B cell (primary cell): ENCODE measurements at regions of chr7 and their contacts with region 1.

Region 1: GRCh38 chr7:19491821-19492452 is 216.9 kb downstream of the POLR1F start:
- DNase-seq: peak; percentile 8
- ATAC-seq: no peak
- H3K4me3 ChIP-seq: no peak overlapping the region
- H3K4me3 Mint-ChIP-seq: no peak overlapping the region
- H3K27ac ChIP-seq: no peak overlapping the region
- H3K27ac Mint-ChIP-seq: no peak overlapping the region
- H3K4me1 ChIP-seq: no peaks in the 10 kb centered on the region
- H3K4me1 Mint-ChIP-seq: no peaks in the 10 kb centered on the region
- H3K27me3 ChIP-seq: no peaks in the 10 kb centered on the region
- H3K27me3 Mint-ChIP-seq: no peaks in the 10 kb centered on the region
- CTCF ChIP-seq: peak; percentile 63

Region 2: GRCh38 chr7:19442016-19442785 is 49.7 kb before region 1 on chr7:
- CTCF ChIA-PET with region 1: no interaction called
- POLR2A ChIA-PET with region 1: interaction called, 10 read pairs
- intact Hi-C with region 1: no loop called
- DNase-seq: no peak
- ATAC-seq: no peak
- H3K4me3 ChIP-seq: no peak overlapping the region
- H3K4me3 Mint-ChIP-seq: no peak overlapping the region
- H3K27ac ChIP-seq: no peak overlapping the region
- H3K27ac Mint-ChIP-seq: no peak overlapping the region
- H3K4me1 ChIP-seq: no peaks in the 10 kb centered on the region
- H3K4me1 Mint-ChIP-seq: no peaks in the 10 kb centered on the region
- H3K27me3 ChIP-seq: no peaks in the 10 kb centered on the region
- H3K27me3 Mint-ChIP-seq: peaks cover 3% of the 10 kb centered on the region
- CTCF ChIP-seq: no peak